Prostate gland (tissue), 2 donors: ENCODE measurements at regions of chr12 and their contacts with region 1.

Region 1: GRCh38 chr12:55738123-55739024 is 4.5 kb upstream of the GDF11 start:
- DNase-seq: peak; percentile 84
- H3K4me3 ChIP-seq: peak overlapping the region; percentile 26 to 41
- H3K27ac ChIP-seq: peak overlapping the region; percentile 56 to 61
- H3K4me1 ChIP-seq: no peaks in the 10 kb centered on the region
- H3K27me3 ChIP-seq: no peaks in the 10 kb centered on the region
- CTCF ChIP-seq: peak; percentile 72 to 96 (median 92)
- POLR2A ChIP-seq: no peak

Region 2: DNA sequence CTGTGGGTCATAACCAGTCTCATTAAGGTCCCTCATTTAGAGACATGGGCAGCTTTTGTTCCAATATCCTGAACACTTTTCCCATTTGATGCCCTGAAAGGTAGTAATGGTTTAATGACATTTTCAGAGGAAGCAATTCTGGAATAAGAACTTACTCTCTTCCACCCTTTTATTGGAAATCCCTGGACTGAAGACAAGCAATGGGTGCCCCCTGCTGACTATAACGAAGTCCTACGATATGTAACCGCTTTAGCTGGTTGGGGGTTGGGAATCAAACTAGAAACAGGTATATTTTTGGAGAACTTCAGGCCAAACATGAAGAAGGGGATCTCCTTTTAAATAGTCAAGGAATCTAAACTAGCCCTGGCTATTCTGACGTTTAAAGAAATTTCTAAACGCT is 58.7 kb after region 1 on chr12:
- intact Hi-C with region 1: loop called (anchors 2 kb)
- DNase-seq: peak; percentile 29
- H3K4me3 ChIP-seq: no peak overlapping the region
- H3K27ac ChIP-seq: no peak overlapping the region
- H3K4me1 ChIP-seq: no peaks in the 10 kb centered on the region
- H3K27me3 ChIP-seq: no peaks in the 10 kb centered on the region
- CTCF ChIP-seq: peak in 3 of 4 experiments; percentile 36 to 56 (median 40)
- POLR2A ChIP-seq: no peak

Region 3: GRCh38 chr12:55937956-55938355 is 199.6 kb after region 1 on chr12:
- intact Hi-C with region 1: loop called (anchors 2 kb)
- DNase-seq: no peak
- H3K4me3 ChIP-seq: no peak overlapping the region
- H3K27ac ChIP-seq: no peak overlapping the region
- H3K4me1 ChIP-seq: peaks cover 4% of the 10 kb centered on the region
- H3K27me3 ChIP-seq: no peaks in the 10 kb centered on the region
- CTCF ChIP-seq: no peak
- POLR2A ChIP-seq: no peak

Region 4: DNA sequence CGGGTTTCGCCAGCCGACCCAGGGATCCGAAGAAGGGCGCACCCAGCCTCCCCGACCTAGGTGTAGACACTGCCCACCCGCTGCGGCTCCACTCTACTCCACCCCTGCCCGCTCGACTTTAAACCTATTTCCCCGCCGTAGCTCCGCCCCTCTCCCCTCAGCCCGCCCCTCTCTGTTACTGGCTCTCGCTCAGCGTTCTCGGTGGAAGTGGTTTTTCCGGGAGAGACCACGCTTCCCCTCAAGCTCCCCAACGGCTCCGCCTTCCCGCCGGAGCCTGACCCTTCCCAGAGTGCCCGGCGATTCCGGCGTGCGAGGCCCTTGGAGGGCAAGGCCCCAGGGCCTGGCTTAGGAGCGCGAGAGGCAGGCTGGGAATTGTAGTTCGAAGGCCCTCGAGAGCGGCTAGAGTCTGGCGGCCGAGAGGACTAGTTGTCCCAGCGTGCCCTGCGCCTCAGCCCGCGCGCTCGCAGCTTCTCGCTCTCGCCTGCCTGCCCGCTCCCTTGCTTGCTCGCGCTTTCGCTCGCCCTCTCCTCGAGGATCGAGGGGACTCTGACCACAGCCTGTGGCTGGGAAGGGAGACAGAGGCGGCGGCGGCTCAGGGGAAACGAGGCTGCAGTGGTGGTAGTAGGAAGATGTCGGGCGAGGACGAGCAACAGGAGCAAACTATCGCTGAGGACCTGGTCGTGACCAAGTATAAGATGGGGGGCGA is 365.9 kb after region 1 on chr12 and contains the start of gene PA2G4:
- intact Hi-C with region 1: loop called (anchors 10 kb)
- DNase-seq: peak; percentile 98
- H3K4me3 ChIP-seq: peak within 1 kb of the TSS; percentile 80
- H3K27ac ChIP-seq: peak within 1 kb of the TSS; percentile 86 to 88
- H3K4me1 ChIP-seq: peaks cover 10% of the 10 kb centered on the region
- H3K27me3 ChIP-seq: no peaks in the 10 kb centered on the region
- CTCF ChIP-seq: peak in 2 of 4 experiments; percentile 6 to 21
- POLR2A ChIP-seq: peak; percentile 80
- total RNA-seq, gene PA2G4: 75.0 to 93.3 TPM